Activated CD4-positive, alpha-beta T cell treated with anti-CD3 and anti-CD28 coated beads, Interleukin-2, amount 10 ng/mL, durations not matched to agents 24 days and 14 days (primary cell): ENCODE measurements at regions of chr10 and their contacts with region 1.

Region 1: GRCh38 chr10:114304017-114304570 is 65.0 kb downstream of the VWA2 start:
- DNase-seq: peak; percentile 91
- H3K4me3 Mint-ChIP-seq: peak overlapping the region; percentile 86
- H3K27ac Mint-ChIP-seq: peak overlapping the region; percentile 60
- H3K4me1 Mint-ChIP-seq: peaks cover 16% of the 10 kb centered on the region
- H3K27me3 Mint-ChIP-seq: no peaks in the 10 kb centered on the region

Region 2: DNA sequence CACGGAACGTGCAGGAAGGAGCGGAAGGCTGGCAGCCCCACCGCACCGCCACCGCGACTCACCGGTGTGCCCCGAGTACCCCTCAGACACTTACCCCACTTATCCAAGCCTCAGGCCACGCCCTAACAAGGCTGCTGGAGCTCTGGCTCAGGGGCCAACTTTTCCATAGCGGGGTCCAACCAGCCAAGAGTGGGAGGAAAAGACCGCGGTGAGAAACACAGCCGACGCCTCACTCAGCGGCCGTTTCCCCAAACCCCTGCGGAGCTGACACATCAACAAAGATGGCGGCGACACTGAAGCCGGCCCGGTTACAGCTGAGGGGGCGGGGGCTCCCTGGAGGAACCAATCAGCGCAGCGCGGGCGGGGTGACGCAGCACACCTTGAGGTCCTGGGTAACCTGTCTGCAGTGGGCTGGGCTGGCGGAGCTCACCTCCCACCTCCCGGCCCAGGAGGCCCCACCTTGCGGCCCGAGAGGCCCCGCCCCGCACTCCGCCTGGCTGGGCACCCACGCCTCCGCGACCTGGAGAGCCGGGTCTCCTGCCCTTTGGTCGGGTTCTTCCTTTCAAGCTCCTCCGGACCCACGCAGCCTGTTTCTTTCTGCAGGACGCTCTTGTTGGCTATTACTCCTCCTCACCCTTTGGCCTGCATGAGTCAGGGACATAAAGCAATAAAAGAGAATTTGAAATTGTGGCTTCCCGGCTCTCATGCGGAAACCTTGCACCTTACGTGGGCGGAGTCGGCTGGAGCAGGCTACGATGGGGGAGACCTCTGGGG is 130.0 kb before region 1 on chr10 and contains the start of gene CCDC186:
- intact Hi-C with region 1: loop called (anchors 10 kb)
- DNase-seq: peak; percentile 99
- H3K4me3 Mint-ChIP-seq: peak within 1 kb of the TSS; percentile 100
- H3K27ac Mint-ChIP-seq: peak within 1 kb of the TSS; percentile 97
- H3K4me1 Mint-ChIP-seq: peaks cover 22% of the 10 kb centered on the region
- H3K27me3 Mint-ChIP-seq: peaks cover 23% of the 10 kb centered on the region
- total RNA-seq, gene CCDC186: 9.0 and 9.4 TPM in 2 replicates

Region 3: GRCh38 chr10:114427124-114427852 is 123.2 kb after region 1 on chr10:
- intact Hi-C with region 1: no loop called
- DNase-seq: no peak
- H3K4me3 Mint-ChIP-seq: no peak overlapping the region
- H3K27ac Mint-ChIP-seq: no peak overlapping the region
- H3K4me1 Mint-ChIP-seq: peaks cover 3% of the 10 kb centered on the region
- H3K27me3 Mint-ChIP-seq: no peaks in the 10 kb centered on the region

Region 4: GRCh38 chr10:114437456-114438292 is 133.6 kb after region 1 on chr10:
- intact Hi-C with region 1: loop called (anchors 1 kb)
- DNase-seq: no peak
- H3K4me3 Mint-ChIP-seq: no peak overlapping the region
- H3K27ac Mint-ChIP-seq: no peak overlapping the region
- H3K4me1 Mint-ChIP-seq: peaks cover 2% of the 10 kb centered on the region
- H3K27me3 Mint-ChIP-seq: no peaks in the 10 kb centered on the region

Region 5: GRCh38 chr10:114470361-114470760 is 166.3 kb after region 1 on chr10:
- intact Hi-C with region 1: no loop called
- DNase-seq: no peak
- H3K4me3 Mint-ChIP-seq: no peak overlapping the region
- H3K27ac Mint-ChIP-seq: no peak overlapping the region
- H3K4me1 Mint-ChIP-seq: peaks cover 17% of the 10 kb centered on the region
- H3K27me3 Mint-ChIP-seq: no peaks in the 10 kb centered on the region

Region 6: GRCh38 chr10:114550756-114551635 is 246.9 kb after region 1 on chr10:
- intact Hi-C with region 1: loop called (anchors 2 kb)
- DNase-seq: no peak
- H3K4me3 Mint-ChIP-seq: no peak overlapping the region
- H3K27ac Mint-ChIP-seq: no peak overlapping the region
- H3K4me1 Mint-ChIP-seq: peaks cover 18% of the 10 kb centered on the region
- H3K27me3 Mint-ChIP-seq: peaks cover 2% of the 10 kb centered on the region

Region 7: DNA sequence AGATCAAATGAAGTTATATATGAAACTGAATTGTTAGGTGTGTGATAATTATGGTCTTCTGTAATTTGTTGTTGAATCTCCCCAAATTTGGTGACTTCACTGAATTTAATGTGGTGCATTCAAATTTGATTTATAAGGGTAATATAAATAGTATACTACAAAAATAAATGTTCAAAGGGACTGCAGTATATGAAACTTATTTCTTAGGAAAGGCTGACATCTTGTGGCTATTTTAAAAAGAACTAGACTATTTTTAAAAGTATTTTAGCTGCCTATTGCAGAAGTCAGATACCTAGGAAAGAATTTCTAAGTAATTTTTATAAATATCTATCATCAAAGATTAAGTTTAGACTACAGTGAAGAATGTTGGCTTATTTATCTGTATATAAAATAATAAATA is 825.7 kb after region 1 on chr10:
- intact Hi-C with region 1: loop called (anchors 5 kb)
- DNase-seq: no peak
- H3K4me3 Mint-ChIP-seq: no peak overlapping the region
- H3K27ac Mint-ChIP-seq: no peak overlapping the region
- H3K4me1 Mint-ChIP-seq: no peaks in the 10 kb centered on the region
- H3K27me3 Mint-ChIP-seq: no peaks in the 10 kb centered on the region